ENCODE measurements at regions of chr16 and their contacts with region 1.

Region 1: GRCh38 chr16:22001591-22001990 is 675 bp upstream of the PDZD9 start:
- DNase-seq: no peak
- H3K4me3 ChIP-seq: no peak overlapping the region
- H3K27ac ChIP-seq: no peak overlapping the region
- H3K4me1 ChIP-seq: peaks cover 0 to 3% of the 10 kb centered on the region in 2 donors
- H3K27me3 ChIP-seq: no peaks in the 10 kb centered on the region
- CTCF ChIP-seq: no peak
- POLR2A ChIP-seq: no peak

Region 2: DNA sequence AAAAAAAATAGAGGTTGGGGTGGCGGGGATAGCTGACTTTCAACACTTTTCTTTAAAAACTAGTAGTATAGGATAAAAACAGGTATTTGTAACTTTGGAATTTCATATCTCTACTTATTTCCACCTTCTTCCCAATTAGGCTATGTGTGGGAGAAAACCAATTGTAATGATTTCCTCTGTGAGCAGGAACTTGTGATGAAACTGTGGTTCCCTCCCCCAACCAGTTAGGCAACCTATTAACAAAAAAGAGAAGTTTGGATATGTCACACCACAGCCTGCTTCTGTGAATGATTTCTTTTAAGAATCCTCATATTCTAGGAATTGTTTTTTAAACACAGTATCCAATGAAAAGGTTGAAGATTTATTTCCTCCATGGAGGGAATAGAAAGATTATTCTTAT is 351.1 kb before region 1 on chr16:
- intact Hi-C with region 1: no loop called
- DNase-seq: no peak
- H3K4me3 ChIP-seq: no peak overlapping the region
- H3K27ac ChIP-seq: no peak overlapping the region
- H3K4me1 ChIP-seq: no peaks in the 10 kb centered on the region
- H3K27me3 ChIP-seq: no peaks in the 10 kb centered on the region
- CTCF ChIP-seq: no peak
- POLR2A ChIP-seq: no peak

Region 3: GRCh38 chr16:22077700-22078313 is 76.2 kb after region 1 on chr16:
- intact Hi-C with region 1: loop called (anchors 5 kb)
- DNase-seq: peak; percentile 42 to 56
- H3K4me3 ChIP-seq: no peak overlapping the region
- H3K27ac ChIP-seq: no peak overlapping the region
- H3K4me1 ChIP-seq: no peaks in the 10 kb centered on the region
- H3K27me3 ChIP-seq: no peaks in the 10 kb centered on the region
- CTCF ChIP-seq: peak; percentile 56 to 80 (median 68)
- POLR2A ChIP-seq: no peak

Region 4: DNA sequence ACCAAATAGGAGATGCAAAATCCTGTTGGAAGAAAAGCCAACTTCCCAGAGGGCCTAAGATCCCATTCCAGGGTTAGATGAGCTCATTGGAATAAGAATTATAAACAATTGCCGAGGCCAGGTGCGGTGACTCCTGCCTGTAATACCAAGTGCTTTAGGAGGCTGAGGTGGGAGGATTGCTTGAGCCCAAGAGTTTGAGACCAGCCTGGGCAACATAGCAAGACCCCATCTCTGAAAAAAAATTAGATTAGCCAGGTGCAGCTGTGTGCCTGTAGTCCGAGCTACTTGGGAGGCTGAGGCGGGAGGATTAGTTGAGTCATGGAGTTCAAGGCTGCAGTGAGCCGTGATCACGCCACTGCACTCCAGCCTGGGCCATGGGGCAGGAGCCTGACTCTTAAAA is 142.9 kb after region 1 on chr16:
- intact Hi-C with region 1: no loop called
- DNase-seq: no peak
- H3K4me3 ChIP-seq: no peak overlapping the region
- H3K27ac ChIP-seq: no peak overlapping the region
- H3K4me1 ChIP-seq: no peaks in the 10 kb centered on the region
- H3K27me3 ChIP-seq: no peaks in the 10 kb centered on the region
- CTCF ChIP-seq: no peak
- POLR2A ChIP-seq: no peak

Region 5: GRCh38 chr16:22186517-22186916 is 184.9 kb after region 1 on chr16:
- intact Hi-C with region 1: loop called (anchors 2 kb)
- DNase-seq: no peak
- H3K4me3 ChIP-seq: no peak overlapping the region
- H3K27ac ChIP-seq: no peak overlapping the region
- H3K4me1 ChIP-seq: peaks cover 0 to 3% of the 10 kb centered on the region in 2 donors
- H3K27me3 ChIP-seq: no peaks in the 10 kb centered on the region
- CTCF ChIP-seq: no peak
- POLR2A ChIP-seq: no peak

Region 6: DNA sequence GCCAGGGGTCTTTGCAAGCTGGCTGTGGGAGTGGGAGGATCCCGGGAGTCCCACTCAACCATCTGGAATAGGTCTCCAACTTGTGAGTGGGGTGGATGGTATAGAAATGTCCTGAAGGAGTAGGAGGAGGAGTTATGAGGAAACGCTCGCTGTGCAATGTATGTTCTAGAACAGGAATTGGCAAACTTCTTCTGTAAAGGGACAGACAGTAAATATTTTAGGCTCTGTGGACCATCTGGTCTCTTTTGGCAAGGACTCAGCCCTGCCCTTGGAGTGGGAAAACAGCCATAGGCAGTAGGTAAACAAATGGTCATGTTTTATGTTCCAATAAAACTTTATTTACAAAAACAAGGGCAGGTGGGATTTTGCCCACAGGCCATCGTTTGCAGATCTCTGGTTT is 658.3 kb after region 1 on chr16:
- intact Hi-C with region 1: no loop called
- DNase-seq: no peak
- H3K4me3 ChIP-seq: no peak overlapping the region
- H3K27ac ChIP-seq: no peak overlapping the region
- H3K4me1 ChIP-seq: no peaks in the 10 kb centered on the region
- H3K27me3 ChIP-seq: no peaks in the 10 kb centered on the region
- CTCF ChIP-seq: no peak
- POLR2A ChIP-seq: no peak

Measured in uterus (tissue), 4 donors.